ENCODE measurements at regions of chr6 and their contacts with region 1.

Region 1: DNA sequence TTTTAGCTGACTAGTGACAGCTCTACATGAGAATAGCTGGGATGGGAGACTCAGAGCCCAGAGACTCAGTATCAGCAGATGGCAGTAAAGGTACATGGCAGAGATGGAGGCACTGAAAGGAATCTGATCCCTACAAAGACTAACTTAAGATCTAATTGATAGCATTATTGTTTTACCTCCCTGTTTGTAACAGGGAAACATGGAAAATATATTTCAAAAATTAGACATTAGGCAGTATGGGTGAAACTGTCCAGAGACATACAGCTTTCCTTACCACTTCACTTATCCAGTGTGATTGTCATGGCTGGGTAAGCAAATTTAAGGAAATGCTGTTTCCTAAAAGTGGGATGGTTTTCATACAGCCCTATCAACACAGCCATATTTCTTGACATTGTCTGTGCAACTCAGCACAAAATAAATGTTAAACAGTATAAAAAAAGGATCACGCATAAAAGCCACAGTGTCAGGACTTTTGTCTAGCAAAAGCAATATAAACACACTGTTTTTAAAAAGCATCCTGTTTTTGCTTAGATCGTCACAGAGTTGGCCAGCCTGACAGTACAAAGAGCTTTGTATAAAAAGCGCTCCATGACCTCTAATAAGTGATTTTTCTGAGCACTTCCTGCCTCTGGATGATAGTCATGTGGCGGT is 376.9 kb downstream of the PHF3 start:
- DNase-seq: peak; percentile 2 to 43
- ATAC-seq: peak; percentile 77 to 81; a peak in 5 of 6 replicates
- H3K4me3 ChIP-seq: no peak overlapping the region
- H3K27ac ChIP-seq: no peak overlapping the region
- H3K4me1 ChIP-seq: no peaks in the 10 kb centered on the region
- CTCF ChIP-seq: peak; percentile 39; the same call in 2 of the 3 replicates
- EP300 ChIP-seq: no peak
- POLR2A ChIP-seq: no peak
- RAD21 ChIP-seq: peak; percentile 59 to 70

Region 2: DNA sequence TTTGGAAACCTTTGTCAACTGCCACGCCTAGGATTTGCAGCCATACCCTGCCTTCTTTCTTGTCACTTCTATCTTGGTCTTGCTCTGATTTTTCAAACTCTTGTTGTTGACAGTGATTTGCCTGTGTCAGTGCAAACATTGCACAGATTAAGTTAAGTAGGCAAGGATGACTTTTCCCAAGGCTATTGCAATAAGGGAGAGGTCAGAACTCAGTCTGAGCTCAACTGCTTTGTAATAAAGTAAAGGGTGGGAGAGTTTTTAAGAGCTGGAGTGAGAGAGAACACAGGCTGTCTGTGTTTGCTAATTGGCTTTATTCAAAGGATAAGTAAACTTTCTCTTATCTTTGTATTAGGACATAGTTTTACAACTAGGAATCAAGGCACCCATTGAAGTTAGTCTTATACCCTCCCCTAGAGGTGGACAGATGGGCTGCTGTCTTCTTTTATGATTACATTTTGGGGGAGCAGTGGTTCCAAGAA is 71.7 kb after region 1 on chr6:
- CTCF ChIA-PET with region 1: no interaction called
- POLR2A ChIA-PET with region 1: no interaction called
- DNase-seq: peak in 1 of 2 experiments; percentile 1
- ATAC-seq: no peak
- H3K4me3 ChIP-seq: no peak overlapping the region
- H3K27ac ChIP-seq: no peak overlapping the region
- H3K4me1 ChIP-seq: no peaks in the 10 kb centered on the region
- CTCF ChIP-seq: no peak
- EP300 ChIP-seq: no peak
- POLR2A ChIP-seq: no peak
- RAD21 ChIP-seq: no peak

Region 3: DNA sequence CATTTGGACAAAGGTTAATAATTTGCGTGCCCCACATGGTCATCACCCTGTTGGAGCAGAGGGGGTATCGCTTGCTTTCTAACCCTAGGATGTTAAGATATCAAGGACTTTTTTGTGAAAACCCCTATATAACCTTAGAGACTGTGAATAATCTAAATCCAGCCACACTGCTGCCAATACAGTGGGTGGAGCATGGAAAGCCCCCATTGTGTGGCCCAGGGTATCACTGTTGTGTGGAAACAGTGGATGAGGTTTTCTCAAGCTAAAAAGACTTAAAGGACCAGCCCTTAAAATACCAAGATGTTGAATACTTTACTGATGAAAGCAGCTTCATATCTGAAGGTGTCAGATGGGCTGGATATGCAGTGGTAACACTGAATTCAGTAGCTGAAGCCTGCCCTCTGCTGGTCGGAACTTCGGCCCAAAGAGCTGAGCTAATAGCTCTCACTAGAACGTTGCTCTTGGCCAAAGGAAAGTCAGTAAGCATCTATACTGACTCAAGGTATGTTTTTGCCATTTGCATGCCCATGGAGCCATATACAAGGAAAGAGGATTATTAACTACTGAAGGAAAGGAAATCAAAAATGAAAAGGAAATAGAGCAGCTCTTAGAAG is 318.3 kb after region 1 on chr6:
- CTCF ChIA-PET with region 1: interaction called, 31 read pairs
- POLR2A ChIA-PET with region 1: no interaction called
- DNase-seq: peak in 1 of 2 experiments; percentile 43
- ATAC-seq: peak in 1 of 2 experiments; percentile 48; a peak in 2 of 6 replicates
- H3K4me3 ChIP-seq: no peak overlapping the region
- H3K27ac ChIP-seq: no peak overlapping the region
- H3K4me1 ChIP-seq: no peaks in the 10 kb centered on the region
- CTCF ChIP-seq: peak; percentile 38; the same call in 2 of the 3 replicates
- EP300 ChIP-seq: no peak
- POLR2A ChIP-seq: no peak
- RAD21 ChIP-seq: peak; percentile 55 to 60

Measured in A549 (cell line).